H1 (cell line): ENCODE measurements at regions of chr4 and their contacts with region 1.

Region 1: DNA sequence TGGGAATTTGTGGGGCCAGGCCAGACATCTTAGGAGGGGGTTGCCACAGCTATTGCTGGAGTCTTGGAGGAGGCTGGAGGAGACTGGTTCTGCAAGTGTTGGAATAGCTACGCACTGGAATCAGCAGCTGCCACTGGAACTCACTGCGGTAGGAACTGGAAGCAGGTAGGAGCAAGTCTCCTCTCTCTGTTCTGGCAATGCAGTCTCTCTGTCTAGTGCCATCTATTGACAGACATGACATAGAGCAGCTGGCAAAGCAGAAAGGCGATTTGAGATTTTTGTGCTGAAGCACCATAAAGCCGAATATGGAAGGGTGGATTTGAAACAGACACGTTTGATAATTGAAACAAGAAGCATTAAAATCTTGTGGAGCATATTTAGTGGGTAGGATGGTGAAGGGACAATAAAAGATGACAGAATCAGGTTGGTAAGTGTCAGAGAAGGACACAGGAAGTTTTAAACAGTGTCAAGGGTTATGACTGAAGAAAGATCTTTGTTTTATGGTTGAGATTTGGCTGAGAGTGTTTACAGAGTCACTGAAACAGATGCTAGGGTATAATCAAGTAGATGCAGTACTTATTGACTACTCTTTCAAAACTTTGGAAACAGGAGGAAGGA is 23.5 kb upstream of the SYNPO2 start:
- DNase-seq: no peak
- H3K4me3 ChIP-seq: no peak overlapping the region
- H3K27ac ChIP-seq: no peak overlapping the region
- H3K4me1 ChIP-seq: peaks cover 0 to 9% (median 7%) of the 10 kb centered on the region in 4 experiments; a peak in 5 of 7 replicates
- H3K27me3 ChIP-seq: no peaks in the 10 kb centered on the region
- CTCF ChIP-seq: peak; percentile 28 to 85 (median 74)
- EP300 ChIP-seq: no peak
- POLR2A ChIP-seq: no peak
- RAD21 ChIP-seq: peak; percentile 65 to 76

Region 2: DNA sequence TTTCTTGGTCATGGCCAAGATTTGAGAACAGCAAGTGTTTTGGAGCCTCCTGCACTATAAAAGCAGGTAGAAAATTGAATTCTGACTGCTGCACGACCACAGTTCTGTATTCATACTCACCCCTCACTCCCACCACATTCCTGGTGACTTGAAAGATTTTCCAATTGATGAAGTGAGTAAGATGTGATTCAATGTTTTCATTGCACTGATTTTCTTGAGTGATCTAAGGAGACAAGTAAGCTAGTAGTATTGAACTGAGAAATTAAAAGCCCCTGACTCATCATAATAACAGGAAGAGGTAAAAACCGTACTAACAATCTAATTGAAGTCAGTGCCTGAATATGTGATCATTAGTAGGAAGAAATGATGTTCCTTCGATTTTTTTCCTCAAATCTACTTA is 23.1 kb before region 1 on chr4:
- CTCF ChIA-PET with region 1: interaction called, 12 read pairs
- POLR2A ChIA-PET with region 1: interaction called, 4 read pairs
- DNase-seq: no peak
- H3K4me3 ChIP-seq: no peak overlapping the region
- H3K27ac ChIP-seq: no peak overlapping the region
- H3K4me1 ChIP-seq: peaks cover 0 to 3% (median 1%) of the 10 kb centered on the region in 4 experiments; a peak in 3 of 7 replicates
- H3K27me3 ChIP-seq: no peaks in the 10 kb centered on the region
- CTCF ChIP-seq: no peak
- EP300 ChIP-seq: no peak
- POLR2A ChIP-seq: no peak
- RAD21 ChIP-seq: no peak

Region 3: GRCh38 chr4:118850488-118851173 is 14.6 kb before region 1 on chr4:
- CTCF ChIA-PET with region 1: interaction called, 14 read pairs
- POLR2A ChIA-PET with region 1: interaction called, 8 read pairs
- DNase-seq: no peak
- H3K4me3 ChIP-seq: peak overlapping the region; percentile 45 to 66 (median 50)
- H3K27ac ChIP-seq: peak overlapping the region; percentile 57; the same call in 1 of the 2 replicates
- H3K4me1 ChIP-seq: peaks cover 0 to 13% (median 9%) of the 10 kb centered on the region in 4 experiments; a peak in 5 of 7 replicates
- H3K27me3 ChIP-seq: no peaks in the 10 kb centered on the region
- CTCF ChIP-seq: no peak
- EP300 ChIP-seq: no peak
- POLR2A ChIP-seq: peak in 1 of 2 experiments; percentile 54; a peak in 2 of 3 replicates
- RAD21 ChIP-seq: no peak